Caco-2 (cell line): ENCODE measurements at regions of chr9 and their contacts with region 1.

Region 1: DNA sequence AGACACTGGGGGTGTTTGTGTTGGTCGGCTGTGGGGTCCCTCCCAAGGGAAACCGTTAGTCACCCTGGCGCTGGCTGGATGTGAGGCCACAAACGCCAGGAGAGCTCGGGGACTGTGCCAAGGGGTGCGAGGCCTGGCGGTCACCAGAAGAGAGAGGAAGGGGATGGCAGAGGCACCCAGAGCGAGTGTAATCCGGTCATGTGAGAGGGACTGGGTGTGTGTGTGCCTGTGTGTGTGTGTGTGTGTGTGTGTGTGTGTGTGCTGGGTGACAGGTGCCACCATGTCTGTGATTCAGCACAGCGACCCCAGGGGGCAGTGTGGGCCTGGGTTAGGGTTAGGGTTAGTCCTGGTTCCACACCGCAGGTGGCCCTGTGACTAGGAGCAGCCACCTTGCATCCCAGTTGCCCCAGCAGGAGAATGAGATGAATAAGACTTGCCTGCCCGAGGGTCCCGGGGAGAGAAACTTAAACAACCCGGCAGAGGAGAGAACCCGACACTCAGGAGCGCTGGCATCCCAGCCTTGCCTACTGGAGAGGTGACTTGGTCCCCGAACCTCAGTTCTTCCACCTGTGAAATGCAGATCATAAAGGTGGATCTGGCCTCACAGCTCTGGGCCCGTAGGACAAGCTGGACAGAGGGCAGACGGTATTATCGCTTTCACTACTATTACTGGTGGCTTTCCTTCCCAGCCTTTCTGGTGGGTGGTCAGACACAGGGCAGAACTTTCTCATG is 1.4 kb upstream of the ADAMTSL2 start:
- DNase-seq: peak; percentile 86 to 89
- H3K4me3 ChIP-seq: no peak overlapping the region
- H3K4me3 Mint-ChIP-seq: no peak overlapping the region
- H3K27ac Mint-ChIP-seq: no peak overlapping the region
- H3K4me1 ChIP-seq: peaks cover 5% of the 10 kb centered on the region; the same call in 1 of the 2 replicates
- H3K4me1 Mint-ChIP-seq: no peaks in the 10 kb centered on the region
- H3K27me3 ChIP-seq: no peaks in the 10 kb centered on the region
- H3K27me3 Mint-ChIP-seq: no peaks in the 10 kb centered on the region
- CTCF ChIP-seq: peak; percentile 61 to 68

Region 2: GRCh38 chr9:133522073-133523035 is 10.7 kb before region 1 on chr9:
- CTCF ChIA-PET with region 1: no interaction called
- POLR2A ChIA-PET with region 1: no interaction called
- intact Hi-C with region 1: no loop called
- DNase-seq: no peak
- H3K4me3 ChIP-seq: no peak overlapping the region
- H3K4me3 Mint-ChIP-seq: no peak overlapping the region
- H3K27ac Mint-ChIP-seq: no peak overlapping the region
- H3K4me1 ChIP-seq: peaks cover 4% of the 10 kb centered on the region; the same call in 1 of the 2 replicates
- H3K4me1 Mint-ChIP-seq: peaks cover 6% of the 10 kb centered on the region
- H3K27me3 ChIP-seq: no peaks in the 10 kb centered on the region
- H3K27me3 Mint-ChIP-seq: no peaks in the 10 kb centered on the region
- CTCF ChIP-seq: no peak

Region 3: DNA sequence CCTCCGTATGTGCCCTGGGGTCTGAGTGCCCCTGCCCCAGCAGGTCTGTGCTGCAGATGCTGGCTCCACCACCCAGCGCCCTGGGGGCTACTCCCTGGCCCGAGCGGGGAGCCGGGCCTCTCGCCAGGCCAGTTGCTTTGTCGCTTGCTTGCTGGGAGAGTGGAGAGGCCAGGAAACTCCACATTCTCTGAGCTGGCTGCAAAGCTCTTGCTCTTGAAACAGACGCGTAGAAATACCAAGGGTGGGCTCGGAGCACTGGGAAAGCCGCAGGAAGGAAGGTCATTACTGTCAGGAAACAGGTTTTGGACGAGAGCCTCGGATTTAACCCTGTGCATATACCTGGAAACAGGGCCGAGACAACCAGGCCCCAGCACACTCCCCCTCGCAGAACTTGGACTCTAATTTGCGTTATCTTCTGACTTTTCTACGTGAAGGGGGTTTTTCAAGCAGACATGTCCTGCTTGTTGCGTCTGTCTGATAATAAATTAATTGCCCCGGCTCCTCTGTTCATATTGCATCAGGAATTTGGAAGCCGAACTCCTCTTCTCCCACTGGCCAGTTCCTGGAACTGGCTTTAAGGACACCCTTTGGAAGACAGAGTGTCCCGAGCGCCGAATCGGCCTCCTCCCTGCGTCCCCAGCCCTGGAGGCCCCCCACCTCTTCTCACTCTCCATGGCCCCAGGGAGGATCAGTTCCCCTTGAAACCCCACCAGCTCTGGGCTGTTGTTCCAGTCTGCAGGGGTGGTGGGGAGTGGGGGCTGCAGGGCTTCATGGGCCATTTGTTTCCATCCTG is 12.6 kb after region 1 on chr9:
- CTCF ChIA-PET with region 1: no interaction called
- POLR2A ChIA-PET with region 1: no interaction called
- intact Hi-C with region 1: no loop called
- DNase-seq: no peak
- H3K4me3 ChIP-seq: no peak overlapping the region
- H3K4me3 Mint-ChIP-seq: no peak overlapping the region
- H3K27ac Mint-ChIP-seq: no peak overlapping the region
- H3K4me1 ChIP-seq: no peaks in the 10 kb centered on the region
- H3K4me1 Mint-ChIP-seq: no peaks in the 10 kb centered on the region
- H3K27me3 ChIP-seq: no peaks in the 10 kb centered on the region
- H3K27me3 Mint-ChIP-seq: peaks cover 3% of the 10 kb centered on the region
- CTCF ChIP-seq: no peak

Region 4: DNA sequence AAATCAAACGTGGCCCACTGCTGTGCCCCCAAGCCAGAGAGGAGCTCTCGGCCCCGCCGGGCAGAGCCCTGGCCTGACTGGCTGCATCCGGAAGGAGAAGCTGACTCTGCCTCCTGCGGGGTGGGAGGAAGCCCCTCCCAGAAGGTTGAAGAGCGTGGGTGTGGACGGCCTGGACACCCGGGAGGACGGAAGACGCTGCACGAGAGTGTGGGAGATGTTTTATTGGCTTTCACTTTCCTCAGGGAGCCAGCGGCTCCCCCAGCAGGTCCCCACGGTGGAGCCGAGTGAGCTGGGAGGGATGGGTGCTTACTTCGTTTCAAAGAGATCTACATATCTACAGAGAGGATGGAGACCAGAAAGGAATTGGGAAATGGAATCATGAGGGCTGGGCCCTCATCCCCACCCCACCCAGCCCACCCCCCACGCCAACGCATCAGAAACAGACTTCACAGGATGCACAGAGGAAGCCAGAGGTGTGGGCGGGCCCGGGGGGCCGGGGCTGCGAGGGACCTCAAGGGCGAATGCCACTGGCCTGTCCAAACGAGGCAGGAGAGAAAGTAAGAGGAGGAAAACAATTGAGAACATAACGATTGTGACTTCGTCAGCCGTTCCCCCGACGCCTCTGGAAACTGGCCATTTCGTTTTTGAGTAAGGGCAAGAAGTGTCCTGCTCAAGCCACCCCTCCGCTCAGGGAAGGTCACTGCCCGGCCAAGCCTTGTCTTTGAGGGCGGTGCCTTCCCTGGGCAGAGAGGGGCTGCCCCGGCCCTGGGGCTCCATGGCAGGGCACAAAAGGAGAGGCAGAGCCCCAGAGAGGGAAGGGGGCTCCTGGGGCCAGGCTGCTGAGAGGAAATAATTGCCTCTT is 44.0 kb after region 1 on chr9:
- CTCF ChIA-PET with region 1: no interaction called
- POLR2A ChIA-PET with region 1: no interaction called
- intact Hi-C with region 1: loop called (anchors 5 kb)
- DNase-seq: no peak
- H3K4me3 ChIP-seq: no peak overlapping the region
- H3K4me3 Mint-ChIP-seq: no peak overlapping the region
- H3K27ac Mint-ChIP-seq: no peak overlapping the region
- H3K4me1 ChIP-seq: no peaks in the 10 kb centered on the region
- H3K4me1 Mint-ChIP-seq: no peaks in the 10 kb centered on the region
- H3K27me3 ChIP-seq: no peaks in the 10 kb centered on the region; the same call in 1 of the 2 replicates
- H3K27me3 Mint-ChIP-seq: peaks cover 4% of the 10 kb centered on the region
- CTCF ChIP-seq: no peak

Region 5: GRCh38 chr9:133726401-133727276 is 193.5 kb after region 1 on chr9:
- CTCF ChIA-PET with region 1: interaction called, 3 read pairs
- POLR2A ChIA-PET with region 1: no interaction called
- intact Hi-C with region 1: loop called (anchors 1 kb)
- DNase-seq: peak; percentile 75 to 80
- H3K4me3 ChIP-seq: no peak overlapping the region
- H3K4me3 Mint-ChIP-seq: no peak overlapping the region
- H3K27ac Mint-ChIP-seq: no peak overlapping the region
- H3K4me1 ChIP-seq: no peaks in the 10 kb centered on the region
- H3K4me1 Mint-ChIP-seq: peaks cover 4% of the 10 kb centered on the region
- H3K27me3 ChIP-seq: no peaks in the 10 kb centered on the region
- H3K27me3 Mint-ChIP-seq: peaks cover 9% of the 10 kb centered on the region
- CTCF ChIP-seq: peak; percentile 75 to 85